ENCODE measurements at regions of chr2 and their contacts with region 1.

Region 1: GRCh38 chr2:207625018-207625907 is at the start of gene METTL21A:
- DNase-seq: peak; percentile 95 to 96
- H3K4me3 ChIP-seq: peak within 1 kb of the TSS; percentile 93
- H3K4me3 Mint-ChIP-seq: peak within 1 kb of the TSS; percentile 93
- H3K27ac Mint-ChIP-seq: peak within 1 kb of the TSS; percentile 92
- H3K4me1 ChIP-seq: no peaks in the 10 kb centered on the region; the same call in 1 of the 2 replicates
- H3K4me1 Mint-ChIP-seq: peaks cover 10% of the 10 kb centered on the region
- H3K27me3 ChIP-seq: no peaks in the 10 kb centered on the region
- H3K27me3 Mint-ChIP-seq: no peaks in the 10 kb centered on the region
- CTCF ChIP-seq: peak; percentile 33 to 61
- total RNA-seq, gene METTL21A: 31.0 and 34.0 TPM in 2 replicates

Region 2: GRCh38 chr2:207600231-207600630 is 25.0 kb before region 1 on chr2:
- CTCF ChIA-PET with region 1: no interaction called
- POLR2A ChIA-PET with region 1: interaction called, 5 read pairs
- intact Hi-C with region 1: loop called (anchors 2 kb)
- DNase-seq: no peak
- H3K4me3 ChIP-seq: no peak overlapping the region
- H3K4me3 Mint-ChIP-seq: no peak overlapping the region
- H3K27ac Mint-ChIP-seq: no peak overlapping the region
- H3K4me1 ChIP-seq: no peaks in the 10 kb centered on the region
- H3K4me1 Mint-ChIP-seq: no peaks in the 10 kb centered on the region
- H3K27me3 ChIP-seq: no peaks in the 10 kb centered on the region
- H3K27me3 Mint-ChIP-seq: no peaks in the 10 kb centered on the region
- CTCF ChIP-seq: no peak

Region 3: GRCh38 chr2:207683879-207684627 is 58.8 kb after region 1 on chr2:
- CTCF ChIA-PET with region 1: interaction called, 14 read pairs
- POLR2A ChIA-PET with region 1: interaction called, 11 read pairs
- intact Hi-C with region 1: loop called (anchors 1 kb)
- DNase-seq: peak; percentile 54 to 74
- H3K4me3 ChIP-seq: no peak overlapping the region
- H3K4me3 Mint-ChIP-seq: peak overlapping the region; percentile 16
- H3K27ac Mint-ChIP-seq: peak overlapping the region; percentile 83
- H3K4me1 ChIP-seq: peaks cover 23% of the 10 kb centered on the region
- H3K4me1 Mint-ChIP-seq: peaks cover 30% of the 10 kb centered on the region
- H3K27me3 ChIP-seq: no peaks in the 10 kb centered on the region
- H3K27me3 Mint-ChIP-seq: no peaks in the 10 kb centered on the region
- CTCF ChIP-seq: no peak

Region 4: DNA sequence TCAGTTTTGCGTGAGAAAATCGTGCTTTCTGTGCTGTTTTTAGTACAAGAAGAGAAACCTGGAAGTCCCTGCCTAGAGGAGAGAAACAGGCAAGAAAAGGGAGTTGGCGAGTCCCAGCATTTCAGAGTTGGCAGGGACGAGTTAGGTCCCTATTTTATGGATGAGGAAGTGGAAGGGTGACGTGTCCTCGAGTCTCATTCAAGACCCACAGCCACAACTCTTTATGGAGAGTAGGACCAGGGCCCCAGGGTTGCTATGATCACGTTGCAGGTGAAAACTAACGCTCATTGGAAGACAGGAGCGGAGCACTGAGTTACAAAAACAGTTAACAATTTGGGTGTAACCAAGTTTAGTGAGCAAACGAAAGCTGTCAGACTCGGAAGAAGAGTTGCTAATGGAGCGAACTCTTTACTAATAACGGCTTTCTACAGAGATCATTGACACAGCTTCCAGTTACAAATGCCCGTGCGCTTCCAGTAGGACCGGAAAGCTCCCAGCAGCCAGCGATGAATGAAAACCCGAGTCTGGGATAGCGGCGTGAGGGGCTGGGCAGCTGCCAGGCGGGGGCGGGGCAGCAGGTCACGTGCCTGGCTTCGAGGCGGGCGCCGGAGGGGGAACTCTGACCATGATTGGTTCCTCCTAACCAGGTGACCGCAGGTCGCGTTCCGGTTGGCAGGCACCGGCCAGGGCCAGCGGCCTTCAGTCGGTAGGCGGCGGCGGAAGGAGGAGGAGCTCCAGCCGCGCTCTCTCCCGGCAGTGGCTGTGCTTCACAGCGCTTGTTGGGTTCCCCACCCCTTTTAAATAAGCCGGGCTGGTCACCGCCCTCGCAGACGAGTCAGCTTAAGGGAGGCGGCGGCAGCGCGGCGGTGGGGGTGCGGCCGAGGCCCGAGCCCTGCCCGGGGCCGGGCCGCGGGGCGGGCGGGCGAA is 85.8 kb after region 1 on chr2 and contains the start of gene CCNYL1:
- CTCF ChIA-PET with region 1: interaction called, 31 read pairs
- POLR2A ChIA-PET with region 1: interaction called, 69 read pairs
- intact Hi-C with region 1: loop called (anchors 1 kb)
- DNase-seq: peak; percentile 100
- H3K4me3 ChIP-seq: peak within 1 kb of the TSS; percentile 83
- H3K4me3 Mint-ChIP-seq: peak within 1 kb of the TSS; percentile 96
- H3K27ac Mint-ChIP-seq: peak within 1 kb of the TSS; percentile 88
- H3K4me1 ChIP-seq: peaks cover 14% of the 10 kb centered on the region; the same call in 1 of the 2 replicates
- H3K4me1 Mint-ChIP-seq: peaks cover 6% of the 10 kb centered on the region
- H3K27me3 ChIP-seq: no peaks in the 10 kb centered on the region
- H3K27me3 Mint-ChIP-seq: no peaks in the 10 kb centered on the region
- CTCF ChIP-seq: peak in 1 of 2 experiments; percentile 20
- total RNA-seq, gene CCNYL1: 39.4 and 40.7 TPM in 2 replicates

Region 5: DNA sequence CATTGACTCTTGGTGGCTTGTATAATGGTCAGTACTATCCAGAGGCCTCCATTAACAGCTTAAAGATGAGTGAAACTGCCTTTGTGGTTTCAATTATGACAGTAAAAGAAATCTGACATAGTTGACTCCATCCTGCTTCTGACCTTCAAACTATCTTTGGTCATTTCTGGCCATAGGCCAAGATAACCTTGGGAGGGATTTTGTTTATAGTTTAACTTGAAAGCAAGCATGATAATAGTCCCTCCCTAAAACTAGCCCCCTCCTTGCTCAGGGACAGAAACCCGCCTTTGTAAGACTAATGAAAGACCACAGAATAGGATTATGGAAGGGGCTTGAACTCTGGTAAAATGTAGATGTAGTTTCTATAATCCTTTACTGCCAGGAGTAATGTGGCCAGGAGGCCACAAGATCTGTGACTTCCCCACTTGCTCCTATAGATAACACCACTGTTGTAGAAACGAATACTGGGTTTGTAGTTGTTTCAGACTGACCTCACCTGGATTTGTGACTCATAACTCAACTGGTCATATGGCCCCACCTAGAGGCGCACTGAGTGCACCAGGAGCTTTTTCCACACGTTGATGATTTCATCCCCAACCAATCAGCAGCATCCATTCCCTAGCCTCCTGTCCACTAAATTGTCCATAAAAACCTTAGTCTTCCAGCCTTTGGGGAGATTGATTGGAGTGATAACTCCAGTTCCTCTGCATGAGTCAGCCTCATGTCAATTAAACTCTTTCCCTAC is 408.7 kb after region 1 on chr2:
- CTCF ChIA-PET with region 1: no interaction called
- POLR2A ChIA-PET with region 1: no interaction called
- intact Hi-C with region 1: loop called (anchors 10 kb)
- DNase-seq: peak; percentile 82 to 85
- H3K4me3 ChIP-seq: no peak overlapping the region
- H3K4me3 Mint-ChIP-seq: no peak overlapping the region
- H3K27ac Mint-ChIP-seq: peak overlapping the region; percentile 70
- H3K4me1 ChIP-seq: peaks cover 51% of the 10 kb centered on the region
- H3K4me1 Mint-ChIP-seq: peaks cover 39% of the 10 kb centered on the region
- H3K27me3 ChIP-seq: no peaks in the 10 kb centered on the region
- H3K27me3 Mint-ChIP-seq: no peaks in the 10 kb centered on the region
- CTCF ChIP-seq: peak; percentile 36

Region 6: DNA sequence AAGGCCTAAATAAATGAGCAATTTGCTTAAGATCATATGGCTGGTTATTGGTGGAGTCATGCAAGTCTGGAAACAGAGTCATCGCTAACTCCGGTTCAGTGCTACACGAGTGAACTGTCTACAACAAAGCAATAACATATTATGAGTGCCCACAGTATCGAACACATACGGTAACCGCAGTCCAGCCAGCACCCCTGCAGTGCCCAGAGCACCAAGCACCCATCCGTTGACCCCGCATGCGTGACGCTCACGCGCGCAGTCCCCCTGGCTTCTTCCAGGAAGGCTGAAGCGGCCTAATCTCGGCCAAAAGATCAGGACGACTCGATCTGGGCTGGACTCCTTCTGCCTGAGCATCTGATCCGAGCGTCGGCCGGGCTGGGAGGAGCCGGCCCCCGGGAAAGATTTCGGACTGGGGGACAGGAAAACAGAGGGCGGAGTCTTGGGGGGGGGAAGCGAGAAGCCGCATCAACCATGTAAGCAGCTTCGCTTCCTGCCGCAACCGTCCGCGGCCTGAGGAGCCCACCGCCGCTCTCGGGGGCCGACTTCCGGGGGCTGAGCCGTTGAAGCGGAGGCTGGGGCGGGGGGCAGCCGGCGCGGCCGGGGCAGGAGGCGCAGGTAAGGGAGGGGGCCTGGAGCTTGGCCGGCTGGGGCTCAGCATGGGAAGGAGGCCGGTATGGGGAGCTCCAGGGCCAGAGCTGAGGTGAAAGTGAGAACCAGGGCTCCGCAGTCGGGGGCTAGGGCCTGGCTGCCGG is 640.7 kb after region 1 on chr2 and contains the start of gene PIKFYVE:
- CTCF ChIA-PET with region 1: interaction called, 3 read pairs
- POLR2A ChIA-PET with region 1: no interaction called
- intact Hi-C with region 1: loop called (anchors 2 kb)
- DNase-seq: peak; percentile 96 to 98
- H3K4me3 ChIP-seq: peak within 1 kb of the TSS; percentile 71
- H3K4me3 Mint-ChIP-seq: peak within 1 kb of the TSS; percentile 87
- H3K27ac Mint-ChIP-seq: peak within 1 kb of the TSS; percentile 94
- H3K4me1 ChIP-seq: peaks cover 10% of the 10 kb centered on the region; the same call in 1 of the 2 replicates
- H3K4me1 Mint-ChIP-seq: peaks cover 32% of the 10 kb centered on the region
- H3K27me3 ChIP-seq: no peaks in the 10 kb centered on the region
- H3K27me3 Mint-ChIP-seq: no peaks in the 10 kb centered on the region
- CTCF ChIP-seq: no peak
- total RNA-seq, gene PIKFYVE: 27.9 and 31.2 TPM in 2 replicates